ENCODE measurements at regions of chr3 and their contacts with region 1.

Region 1: GRCh38 chr3:153209596-153209995 is 47.6 kb downstream of the RAP2B start:
- DNase-seq: peak; percentile 82 to 96
- H3K4me3 ChIP-seq: peak overlapping the region; percentile 35; the same call in 1 of the 2 replicates
- H3K27ac ChIP-seq: peak overlapping the region; percentile 84
- H3K4me1 ChIP-seq: peaks cover 34% of the 10 kb centered on the region
- H3K27me3 ChIP-seq: no peaks in the 10 kb centered on the region
- CTCF ChIP-seq: no peak

Region 2: GRCh38 chr3:152505926-152506325 is 703.7 kb before region 1 on chr3:
- CTCF ChIA-PET with region 1: no interaction called
- POLR2A ChIA-PET with region 1: no interaction called
- intact Hi-C with region 1: no loop called
- DNase-seq: no peak
- H3K4me3 ChIP-seq: no peak overlapping the region
- H3K27ac ChIP-seq: no peak overlapping the region
- H3K4me1 ChIP-seq: no peaks in the 10 kb centered on the region
- H3K27me3 ChIP-seq: no peaks in the 10 kb centered on the region
- CTCF ChIP-seq: no peak

Region 3: GRCh38 chr3:153138276-153139210 is 71.1 kb before region 1 on chr3:
- CTCF ChIA-PET with region 1: no interaction called
- POLR2A ChIA-PET with region 1: no interaction called
- intact Hi-C with region 1: loop called (anchors 2 kb)
- DNase-seq: peak; percentile 89 to 100
- H3K4me3 ChIP-seq: no peak overlapping the region
- H3K27ac ChIP-seq: peak overlapping the region; percentile 98
- H3K4me1 ChIP-seq: peaks cover 43% of the 10 kb centered on the region
- H3K27me3 ChIP-seq: no peaks in the 10 kb centered on the region
- CTCF ChIP-seq: no peak

Region 4: GRCh38 chr3:153172796-153173757 is 36.5 kb before region 1 on chr3:
- CTCF ChIA-PET with region 1: no interaction called
- POLR2A ChIA-PET with region 1: interaction called, 32 read pairs
- intact Hi-C with region 1: no loop called
- DNase-seq: peak in 1 of 2 experiments; percentile 21
- H3K4me3 ChIP-seq: no peak overlapping the region
- H3K27ac ChIP-seq: no peak overlapping the region
- H3K4me1 ChIP-seq: peaks cover 5% of the 10 kb centered on the region; the same call in 1 of the 2 replicates
- H3K27me3 ChIP-seq: no peaks in the 10 kb centered on the region
- CTCF ChIP-seq: no peak

Region 5: GRCh38 chr3:153284282-153284938 is 74.8 kb after region 1 on chr3:
- CTCF ChIA-PET with region 1: no interaction called
- POLR2A ChIA-PET with region 1: no interaction called
- intact Hi-C with region 1: loop called (anchors 1 kb)
- DNase-seq: peak; percentile 62 to 66
- H3K4me3 ChIP-seq: no peak overlapping the region
- H3K27ac ChIP-seq: peak overlapping the region; percentile 38
- H3K4me1 ChIP-seq: peaks cover 22% of the 10 kb centered on the region
- H3K27me3 ChIP-seq: no peaks in the 10 kb centered on the region
- CTCF ChIP-seq: no peak

Region 6: DNA sequence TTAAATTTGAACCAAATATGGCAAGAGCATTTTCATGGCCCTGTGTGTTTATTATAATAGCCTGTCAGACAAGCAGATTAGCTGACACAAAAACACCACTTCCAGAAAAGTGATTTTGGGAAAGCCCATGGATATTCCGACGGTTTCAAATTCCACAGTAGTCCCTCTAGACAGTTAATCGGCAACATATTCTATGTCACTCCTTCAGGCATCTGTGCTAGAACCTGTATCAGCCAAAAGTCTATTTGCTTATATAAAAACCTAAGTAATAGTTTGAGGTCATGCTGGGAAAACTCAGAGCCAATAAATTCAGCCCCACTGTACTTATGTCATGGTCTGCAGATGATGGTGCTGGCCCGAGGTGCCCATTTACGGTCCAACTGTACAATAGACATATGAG is 801.4 kb after region 1 on chr3:
- CTCF ChIA-PET with region 1: no interaction called
- POLR2A ChIA-PET with region 1: no interaction called
- intact Hi-C with region 1: no loop called
- DNase-seq: no peak
- H3K4me3 ChIP-seq: no peak overlapping the region
- H3K27ac ChIP-seq: no peak overlapping the region
- H3K4me1 ChIP-seq: no peaks in the 10 kb centered on the region; the same call in 1 of the 2 replicates
- H3K27me3 ChIP-seq: no peaks in the 10 kb centered on the region
- CTCF ChIP-seq: no peak